PC-3 (cell line): ENCODE measurements at regions of chr7 and their contacts with region 1.

Region 1: GRCh38 chr7:79176859-79177477 is 276.5 kb downstream of the MAGI2 start:
- DNase-seq: peak; percentile 66
- ATAC-seq: peak; percentile 79
- H3K4me3 ChIP-seq: no peak overlapping the region
- H3K27ac ChIP-seq: no peak overlapping the region
- H3K4me1 ChIP-seq: no peaks in the 10 kb centered on the region
- H3K27me3 ChIP-seq: no peaks in the 10 kb centered on the region
- CTCF ChIP-seq: peak; percentile 84

Region 2: DNA sequence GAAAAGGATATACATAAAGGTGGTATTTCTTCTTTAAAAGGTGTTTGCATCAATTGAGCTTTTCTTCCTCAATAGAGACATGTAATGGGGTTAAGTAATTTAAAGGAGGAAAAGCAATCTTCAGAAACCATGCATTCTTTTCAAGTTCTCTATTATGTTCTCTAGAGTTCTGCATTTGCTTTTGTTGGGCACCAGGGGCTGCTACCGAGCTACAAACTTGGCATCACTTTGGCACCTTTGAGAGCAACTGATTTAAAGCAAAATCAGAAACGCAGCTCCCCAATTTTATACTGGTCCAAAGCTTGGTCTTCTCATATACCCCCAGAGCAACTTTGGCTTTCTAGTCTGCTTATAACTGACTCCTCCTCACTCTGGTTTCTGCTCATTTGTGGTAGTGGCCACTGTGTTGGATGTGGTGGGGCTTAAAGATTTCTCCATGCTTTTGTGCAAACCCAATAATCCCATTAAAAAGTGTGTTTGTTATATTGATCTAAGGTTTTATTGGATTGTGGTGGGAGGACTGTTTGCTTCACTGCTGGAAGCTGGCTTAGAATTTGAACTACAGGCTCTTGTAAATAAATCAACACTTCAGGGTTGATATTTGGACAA is 666.3 kb before region 1 on chr7:
- CTCF ChIA-PET with region 1: no interaction called
- POLR2A ChIA-PET with region 1: no interaction called
- intact Hi-C with region 1: loop called (anchors 1 kb)
- DNase-seq: peak; percentile 47
- ATAC-seq: peak; percentile 74
- H3K4me3 ChIP-seq: no peak overlapping the region
- H3K27ac ChIP-seq: no peak overlapping the region
- H3K4me1 ChIP-seq: no peaks in the 10 kb centered on the region
- H3K27me3 ChIP-seq: 0 out of 2 replicates have a peak, but pooled peaks cover 5% of the 10 kb centered on the region
- CTCF ChIP-seq: peak; percentile 73

Region 3: DNA sequence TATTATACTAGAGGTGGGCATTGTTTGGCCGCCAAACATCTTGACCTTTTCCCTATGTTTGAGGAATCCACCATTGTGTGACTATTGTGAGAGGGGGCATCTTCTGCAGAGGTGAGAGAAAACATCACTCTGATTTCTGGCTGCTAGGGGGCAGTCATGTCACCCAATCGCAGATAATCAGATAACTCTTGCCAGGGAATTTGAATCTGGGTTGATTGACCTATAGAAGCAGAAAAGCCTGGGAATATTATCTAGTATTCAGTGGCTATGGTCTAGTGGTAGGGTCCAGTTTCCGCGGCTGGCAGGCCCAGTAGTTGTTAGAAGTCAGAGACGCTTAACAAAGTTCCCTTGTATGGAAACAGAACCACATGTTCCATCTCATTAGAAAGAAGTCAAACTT is 569.9 kb before region 1 on chr7:
- CTCF ChIA-PET with region 1: no interaction called
- POLR2A ChIA-PET with region 1: no interaction called
- intact Hi-C with region 1: loop called (anchors 2 kb)
- DNase-seq: peak; percentile 48
- ATAC-seq: peak; percentile 51; the same call in 1 of the 2 replicates
- H3K4me3 ChIP-seq: no peak overlapping the region
- H3K27ac ChIP-seq: no peak overlapping the region
- H3K4me1 ChIP-seq: no peaks in the 10 kb centered on the region
- H3K27me3 ChIP-seq: peaks cover 5% of the 10 kb centered on the region
- CTCF ChIP-seq: peak; percentile 73

Region 4: DNA sequence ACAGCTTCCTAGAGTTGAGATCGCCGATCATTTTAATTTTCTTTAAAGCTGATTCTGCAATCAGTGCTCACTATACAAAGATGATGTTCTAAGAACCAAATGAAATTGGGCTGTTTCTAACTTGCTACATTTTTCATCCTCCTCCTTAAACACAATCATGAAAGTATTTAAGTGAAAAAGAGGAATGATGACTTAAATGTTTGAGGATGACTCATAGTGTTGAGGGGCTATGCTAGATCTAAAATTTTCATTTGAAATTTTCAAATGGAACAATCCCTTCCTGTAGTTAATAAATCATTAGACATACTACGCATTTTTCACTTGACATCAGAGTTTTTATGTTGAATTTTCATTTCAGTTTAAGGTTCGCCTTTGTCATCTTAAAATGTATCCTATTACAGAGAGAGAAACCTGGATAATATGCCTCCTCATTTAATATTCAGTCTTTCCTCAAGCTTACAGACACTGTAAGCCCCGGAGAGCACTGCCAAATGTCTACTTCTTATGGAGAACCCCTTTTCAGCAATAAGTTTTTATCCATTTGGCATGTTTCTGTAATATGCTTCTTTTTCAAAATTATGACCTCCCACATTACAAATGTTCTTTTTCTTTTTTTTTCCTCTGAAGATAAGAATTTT is 223.1 kb before region 1 on chr7:
- CTCF ChIA-PET with region 1: no interaction called
- POLR2A ChIA-PET with region 1: no interaction called
- intact Hi-C with region 1: loop called (anchors 2 kb)
- DNase-seq: no peak
- ATAC-seq: peak; percentile 20; the same call in 1 of the 2 replicates
- H3K4me3 ChIP-seq: no peak overlapping the region
- H3K27ac ChIP-seq: no peak overlapping the region
- H3K4me1 ChIP-seq: peaks cover 19% of the 10 kb centered on the region
- H3K27me3 ChIP-seq: no peaks in the 10 kb centered on the region
- CTCF ChIP-seq: no peak